IMR-90 (cell line): ENCODE measurements at regions of chr9 and their contacts with region 1.

Region 1: GRCh38 chr9:18632632-18633403 is 158.9 kb downstream of the ADAMTSL1 start:
- DNase-seq: peak; percentile 90
- ATAC-seq: peak; percentile 100
- H3K4me3 ChIP-seq: no peak overlapping the region
- H3K27ac ChIP-seq: no peak overlapping the region
- H3K4me1 ChIP-seq: peaks cover under 1% of the 10 kb centered on the region; the same call in 1 of the 2 replicates
- H3K27me3 ChIP-seq: no peaks in the 10 kb centered on the region
- CTCF ChIP-seq: no peak
- POLR2A ChIP-seq: no peak
- RAD21 ChIP-seq: no peak

Region 2: GRCh38 chr9:18658764-18659705 is 26.2 kb after region 1 on chr9:
- CTCF ChIA-PET with region 1: no interaction called
- POLR2A ChIA-PET with region 1: no interaction called
- dilution Hi-C with region 1: no loop called
- in situ Hi-C with region 1: no loop called
- intact Hi-C with region 1: no loop called
- DNase-seq: peak; percentile 64
- ATAC-seq: peak; percentile 54
- H3K4me3 ChIP-seq: no peak overlapping the region
- H3K27ac ChIP-seq: no peak overlapping the region
- H3K4me1 ChIP-seq: peaks cover 2% of the 10 kb centered on the region
- H3K27me3 ChIP-seq: no peaks in the 10 kb centered on the region
- CTCF ChIP-seq: no peak
- POLR2A ChIP-seq: no peak
- RAD21 ChIP-seq: no peak

Region 3: GRCh38 chr9:18824095-18824666 is 191.4 kb after region 1 on chr9:
- CTCF ChIA-PET with region 1: no interaction called
- POLR2A ChIA-PET with region 1: no interaction called
- dilution Hi-C with region 1: no loop called
- in situ Hi-C with region 1: no loop called
- intact Hi-C with region 1: loop called (anchors 10 kb)
- DNase-seq: no peak
- ATAC-seq: no peak
- H3K4me3 ChIP-seq: no peak overlapping the region
- H3K27ac ChIP-seq: no peak overlapping the region
- H3K4me1 ChIP-seq: peaks cover 5% of the 10 kb centered on the region
- H3K27me3 ChIP-seq: no peaks in the 10 kb centered on the region
- CTCF ChIP-seq: peak; percentile 28; the same call in 1 of the 2 replicates
- POLR2A ChIP-seq: no peak
- RAD21 ChIP-seq: peak; percentile 36; the same call in 1 of the 2 replicates